ENCODE measurements at regions of chr12 and their contacts with region 1.

Region 1: GRCh38 chr12:40312982-40313576 is 88.3 kb downstream of the LRRK2 start:
- DNase-seq: no peak

Region 2: GRCh38 chr12:40152783-40153383 is 160.2 kb before region 1 on chr12:
- intact Hi-C with region 1: loop called (anchors 2 kb)
- DNase-seq: peak; percentile 76